Mammary epithelial cell (primary cell): ENCODE measurements at regions of chr4 and their contacts with region 1.

Region 1: GRCh38 chr4:89221167-89221867 is 86.3 kb downstream of the GPRIN3 start:
- DNase-seq: no peak
- H3K4me3 ChIP-seq: no peak overlapping the region
- H3K27ac ChIP-seq: no peak overlapping the region
- H3K4me1 ChIP-seq: no peaks in the 10 kb centered on the region
- H3K27me3 ChIP-seq: no peaks in the 10 kb centered on the region
- CTCF ChIP-seq: no peak

Region 2: GRCh38 chr4:89039730-89040338 is 181.5 kb before region 1 on chr4:
- CTCF ChIA-PET with region 1: no interaction called
- dilution Hi-C with region 1: no loop called
- in situ Hi-C with region 1: no loop called
- intact Hi-C with region 1: no loop called
- DNase-seq: no peak
- H3K4me3 ChIP-seq: no peak overlapping the region
- H3K27ac ChIP-seq: no peak overlapping the region
- H3K4me1 ChIP-seq: no peaks in the 10 kb centered on the region
- H3K27me3 ChIP-seq: no peaks in the 10 kb centered on the region
- CTCF ChIP-seq: no peak

Region 3: GRCh38 chr4:89142691-89143669 is 78.3 kb before region 1 on chr4:
- CTCF ChIA-PET with region 1: no interaction called
- dilution Hi-C with region 1: no loop called
- in situ Hi-C with region 1: no loop called
- intact Hi-C with region 1: no loop called
- DNase-seq: no peak
- H3K4me3 ChIP-seq: no peak overlapping the region
- H3K27ac ChIP-seq: no peak overlapping the region
- H3K4me1 ChIP-seq: no peaks in the 10 kb centered on the region
- H3K27me3 ChIP-seq: no peaks in the 10 kb centered on the region
- CTCF ChIP-seq: no peak

Region 4: GRCh38 chr4:89158884-89159503 is 62.3 kb before region 1 on chr4:
- CTCF ChIA-PET with region 1: interaction called, 13 read pairs
- dilution Hi-C with region 1: no loop called
- in situ Hi-C with region 1: no loop called
- intact Hi-C with region 1: loop called (anchors 5 kb)
- DNase-seq: peak; percentile 35
- H3K4me3 ChIP-seq: no peak overlapping the region
- H3K27ac ChIP-seq: no peak overlapping the region
- H3K4me1 ChIP-seq: no peaks in the 10 kb centered on the region
- H3K27me3 ChIP-seq: no peaks in the 10 kb centered on the region
- CTCF ChIP-seq: peak; percentile 69 to 76

Region 5: GRCh38 chr4:89172860-89173259 is 48.5 kb before region 1 on chr4:
- CTCF ChIA-PET with region 1: no interaction called
- dilution Hi-C with region 1: no loop called
- in situ Hi-C with region 1: no loop called
- intact Hi-C with region 1: loop called (anchors 5 kb)
- DNase-seq: no peak
- H3K4me3 ChIP-seq: no peak overlapping the region
- H3K27ac ChIP-seq: no peak overlapping the region
- H3K4me1 ChIP-seq: no peaks in the 10 kb centered on the region
- H3K27me3 ChIP-seq: peaks cover 6% of the 10 kb centered on the region
- CTCF ChIP-seq: no peak